ENCODE measurements at regions of chr11 and their contacts with region 1.

Region 1: GRCh38 chr11:33161120-33162005 is at the start of gene CSTF3:
- DNase-seq: peak; percentile 98 to 100
- H3K4me3 ChIP-seq: peak within 1 kb of the TSS; percentile 83 to 99 (median 99)
- H3K27ac ChIP-seq: peak within 1 kb of the TSS; percentile 91
- H3K4me1 ChIP-seq: peaks cover 0 to 11% (median 1%) of the 10 kb centered on the region in 4 experiments; a peak in 1 of 7 replicates
- H3K27me3 ChIP-seq: no peaks in the 10 kb centered on the region
- CTCF ChIP-seq: peak; percentile 24 to 41 (median 37)
- EP300 ChIP-seq: 0 out of 3 replicates have a peak, but pooled peaks of 1 of the 2 experiments have one; percentile 68
- POLR2A ChIP-seq: peak; percentile 87 to 96
- RAD21 ChIP-seq: peak in 1 of 2 experiments; percentile 4; a peak in 1 of 4 replicates
- total RNA-seq, gene CSTF3: 54.7 and 61.0 TPM in 2 replicates

Region 2: DNA sequence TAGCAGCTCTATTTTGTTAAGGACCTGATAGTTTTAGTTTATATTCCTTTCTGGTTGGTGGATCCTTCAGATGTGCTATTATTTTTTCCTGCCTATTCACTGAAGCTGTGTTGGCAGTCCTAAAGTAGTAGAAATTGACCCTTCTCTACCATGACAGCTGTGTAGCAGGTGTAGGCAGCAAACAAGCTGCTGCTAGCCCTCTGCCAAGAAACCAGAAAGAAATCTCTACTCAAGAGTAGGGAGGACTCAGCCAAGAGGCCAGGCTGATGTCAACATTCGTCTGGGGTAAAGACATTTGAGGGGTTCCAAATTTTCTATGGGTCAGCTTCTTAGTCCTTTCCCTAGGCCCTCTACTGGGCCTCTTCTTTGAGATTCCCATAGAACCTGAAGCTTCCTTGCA is 51.3 kb before region 1 on chr11:
- CTCF ChIA-PET with region 1: no interaction called
- POLR2A ChIA-PET with region 1: no interaction called
- DNase-seq: no peak
- H3K4me3 ChIP-seq: no peak overlapping the region
- H3K27ac ChIP-seq: no peak overlapping the region
- H3K4me1 ChIP-seq: no peaks in the 10 kb centered on the region
- H3K27me3 ChIP-seq: no peaks in the 10 kb centered on the region
- CTCF ChIP-seq: no peak
- EP300 ChIP-seq: no peak
- POLR2A ChIP-seq: no peak
- RAD21 ChIP-seq: no peak

Region 3: DNA sequence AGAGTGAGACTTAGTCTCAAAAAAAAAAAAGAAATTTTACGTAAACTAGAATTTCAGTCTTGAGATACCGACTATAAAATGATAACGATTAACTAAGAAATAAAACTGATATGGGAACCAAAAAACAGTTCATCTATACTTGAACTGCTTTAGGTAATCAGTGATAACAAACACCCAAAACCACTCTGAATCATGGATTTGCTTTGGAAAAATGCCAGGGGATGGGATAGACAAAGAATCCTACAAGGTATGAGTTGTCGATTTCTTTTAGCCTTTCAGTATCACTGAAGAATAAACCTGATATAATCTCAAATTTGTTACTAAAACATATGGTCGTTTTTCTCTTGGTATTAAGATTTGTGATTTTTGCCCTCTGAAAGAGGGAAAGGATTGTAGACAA is 13.8 kb before region 1 on chr11:
- CTCF ChIA-PET with region 1: interaction called, 5 read pairs
- POLR2A ChIA-PET with region 1: interaction called, 46 read pairs
- DNase-seq: no peak
- H3K4me3 ChIP-seq: no peak overlapping the region
- H3K27ac ChIP-seq: no peak overlapping the region
- H3K4me1 ChIP-seq: peaks cover 0 to 4% (median 2%) of the 10 kb centered on the region in 4 experiments; a peak in 2 of 7 replicates
- H3K27me3 ChIP-seq: no peaks in the 10 kb centered on the region
- CTCF ChIP-seq: no peak
- EP300 ChIP-seq: no peak
- POLR2A ChIP-seq: no peak
- RAD21 ChIP-seq: no peak

Region 4: GRCh38 chr11:33179348-33179803 is 18.0 kb after region 1 on chr11:
- CTCF ChIA-PET with region 1: interaction called, 36 read pairs
- POLR2A ChIA-PET with region 1: interaction called, 3 read pairs
- DNase-seq: no peak
- H3K4me3 ChIP-seq: no peak overlapping the region
- H3K27ac ChIP-seq: no peak overlapping the region
- H3K4me1 ChIP-seq: peaks cover 0 to 15% (median 7%) of the 10 kb centered on the region in 4 experiments; a peak in 4 of 7 replicates
- H3K27me3 ChIP-seq: no peaks in the 10 kb centered on the region
- CTCF ChIP-seq: no peak
- EP300 ChIP-seq: no peak
- POLR2A ChIP-seq: no peak
- RAD21 ChIP-seq: no peak

Region 5: DNA sequence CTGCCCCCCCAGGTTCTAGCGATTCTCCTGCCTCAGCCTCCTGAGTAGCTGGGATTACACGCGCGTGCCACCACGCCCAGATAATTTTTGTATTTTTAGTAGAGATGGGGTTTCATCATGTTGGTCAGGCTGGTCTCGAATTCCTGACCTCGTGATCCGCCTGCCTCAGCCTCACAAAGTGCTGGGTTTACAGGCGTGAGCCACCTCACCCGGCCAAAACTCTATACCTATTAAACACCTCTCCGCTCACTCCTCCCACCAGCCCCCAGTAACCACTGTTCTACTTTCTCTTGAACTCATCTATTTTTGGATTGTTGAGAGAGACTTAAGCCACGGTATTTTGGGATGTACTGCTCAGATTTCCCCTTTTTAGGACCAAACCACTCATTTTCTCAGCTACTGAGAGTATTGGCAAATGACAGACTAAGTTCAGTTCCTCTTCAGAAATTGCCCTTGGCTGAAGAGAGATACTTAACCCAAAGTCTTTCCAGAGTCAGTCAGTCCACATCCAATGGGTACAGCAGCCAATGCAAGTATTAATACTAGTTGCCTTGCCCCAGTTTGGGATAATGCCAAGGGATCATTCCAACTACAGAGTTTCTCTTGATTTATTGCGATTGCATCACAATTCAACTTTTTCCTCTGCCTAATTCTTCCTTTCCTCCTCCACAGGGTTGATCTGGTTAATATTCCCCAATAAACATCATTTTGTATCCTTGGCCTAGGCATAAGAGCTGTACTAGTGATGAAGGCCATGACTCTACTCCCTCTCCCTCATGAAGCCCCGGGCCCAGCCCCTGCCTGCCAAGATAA is 36.8 kb after region 1 on chr11:
- CTCF ChIA-PET with region 1: interaction called, 10 read pairs
- POLR2A ChIA-PET with region 1: interaction called, 4 read pairs
- DNase-seq: no peak
- H3K4me3 ChIP-seq: no peak overlapping the region
- H3K27ac ChIP-seq: no peak overlapping the region
- H3K4me1 ChIP-seq: peaks cover 0 to 3% (median 0%) of the 10 kb centered on the region in 4 experiments; a peak in 2 of 7 replicates
- H3K27me3 ChIP-seq: no peaks in the 10 kb centered on the region
- CTCF ChIP-seq: no peak
- EP300 ChIP-seq: no peak
- POLR2A ChIP-seq: no peak
- RAD21 ChIP-seq: no peak

Region 6: DNA sequence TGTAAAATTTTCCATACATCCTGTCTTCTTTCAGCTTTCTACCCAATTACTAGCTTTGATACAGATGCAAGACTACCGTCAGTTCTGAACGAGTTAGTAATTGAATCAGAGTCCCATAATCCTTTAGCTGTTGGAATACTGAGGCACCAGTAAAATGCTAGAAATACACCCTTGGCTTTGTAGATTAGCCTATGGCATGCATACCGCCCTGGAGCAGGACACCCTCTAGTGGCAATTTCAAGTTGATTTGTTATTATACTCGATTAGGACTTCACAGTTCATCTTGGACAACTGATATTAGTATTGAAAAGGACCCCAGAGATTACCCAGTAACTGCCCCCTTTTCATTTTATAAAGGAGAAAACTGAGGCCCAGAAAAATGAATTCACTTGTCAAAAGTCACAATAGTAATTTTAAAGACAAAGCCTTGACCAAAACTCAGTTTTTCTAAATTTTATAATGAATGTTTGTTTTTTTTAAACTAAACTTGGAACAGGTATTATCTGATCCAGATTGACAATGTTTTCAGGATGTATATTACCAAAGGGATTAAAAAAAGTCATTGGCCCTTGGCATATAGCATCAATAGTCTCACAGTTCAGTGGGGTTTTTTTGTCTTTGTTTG is 168.5 kb after region 1 on chr11:
- CTCF ChIA-PET with region 1: interaction called, 23 read pairs
- POLR2A ChIA-PET with region 1: no interaction called
- DNase-seq: no peak
- H3K4me3 ChIP-seq: no peak overlapping the region
- H3K27ac ChIP-seq: no peak overlapping the region
- H3K4me1 ChIP-seq: no peaks in the 10 kb centered on the region
- H3K27me3 ChIP-seq: no peaks in the 10 kb centered on the region
- CTCF ChIP-seq: peak in 2 of 3 experiments; percentile 55 to 68; a peak in 3 of 4 replicates
- EP300 ChIP-seq: no peak
- POLR2A ChIP-seq: no peak
- RAD21 ChIP-seq: peak; percentile 83 to 84